Vagina (tissue), 2 donors: ENCODE measurements at regions of chr16 and their contacts with region 1.

Region 1: DNA sequence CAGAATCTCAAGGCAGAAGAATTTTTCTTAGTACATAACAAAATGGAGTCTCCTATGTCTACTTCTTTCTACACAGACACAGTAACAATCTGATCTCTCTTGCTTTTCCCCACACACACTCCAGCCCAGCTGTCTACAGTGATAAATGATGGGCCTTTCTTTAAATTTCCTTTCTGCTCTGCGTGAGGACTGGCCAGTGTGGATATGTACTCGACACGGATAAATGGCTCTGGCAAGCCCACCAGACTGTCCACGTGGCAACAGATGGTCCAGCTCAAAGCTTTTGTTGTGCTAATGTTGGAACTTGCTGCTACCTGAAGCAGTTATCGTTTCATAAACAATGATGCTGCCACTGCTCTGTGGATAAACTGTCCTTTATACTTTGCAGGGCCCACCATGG is 410.7 kb downstream of the TMEM114 start:
- DNase-seq: no peak
- H3K4me3 ChIP-seq: no peak overlapping the region
- H3K27ac ChIP-seq: no peak overlapping the region
- H3K4me1 ChIP-seq: no peaks in the 10 kb centered on the region
- H3K27me3 ChIP-seq: no peaks in the 10 kb centered on the region
- CTCF ChIP-seq: no peak
- POLR2A ChIP-seq: no peak

Region 2: GRCh38 chr16:8127070-8127469 is 52.5 kb before region 1 on chr16:
- intact Hi-C with region 1: loop called (anchors 10 kb)
- DNase-seq: no peak
- H3K4me3 ChIP-seq: no peak overlapping the region
- H3K27ac ChIP-seq: no peak overlapping the region
- H3K4me1 ChIP-seq: no peaks in the 10 kb centered on the region
- H3K27me3 ChIP-seq: no peaks in the 10 kb centered on the region
- CTCF ChIP-seq: no peak
- POLR2A ChIP-seq: no peak